Ascending aorta (tissue), 2 donors: ENCODE measurements at regions of chr20 and their contacts with region 1.

Region 1: DNA sequence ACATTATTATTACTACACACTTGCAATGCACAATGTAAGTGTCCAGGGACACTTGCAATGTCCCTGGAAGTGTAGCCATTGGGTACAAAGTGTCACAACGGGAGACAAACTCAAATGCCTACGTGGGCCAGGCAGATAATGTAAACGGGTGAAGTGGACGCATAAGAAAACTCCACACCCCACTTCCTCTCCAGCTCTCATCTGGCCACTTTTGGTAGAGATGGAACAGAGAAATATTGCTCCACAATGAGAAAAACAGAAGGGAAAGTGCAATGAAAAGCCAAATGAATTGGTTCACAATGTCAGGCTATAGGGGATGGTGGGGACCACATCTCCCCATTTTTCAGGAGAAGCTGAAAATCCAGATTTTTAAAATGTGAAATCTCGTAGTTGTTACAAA is 9.4 kb downstream of the SULF2 start:
- DNase-seq: no peak
- H3K4me3 ChIP-seq: no peak overlapping the region
- H3K27ac ChIP-seq: no peak overlapping the region
- H3K4me1 ChIP-seq: peaks cover 0 to 4% of the 10 kb centered on the region in 2 donors
- H3K27me3 ChIP-seq: no peaks in the 10 kb centered on the region
- CTCF ChIP-seq: no peak

Region 2: GRCh38 chr20:47814169-47814921 is 38.5 kb after region 1 on chr20:
- intact Hi-C with region 1: loop called (anchors 2 kb)
- DNase-seq: no peak
- H3K4me3 ChIP-seq: no peak overlapping the region
- H3K27ac ChIP-seq: no peak overlapping the region
- H3K4me1 ChIP-seq: no peaks in the 10 kb centered on the region
- H3K27me3 ChIP-seq: no peaks in the 10 kb centered on the region
- CTCF ChIP-seq: no peak